ENCODE measurements at regions of chr9 and their contacts with region 1.

Region 1: GRCh38 chr9:86843206-86843605 is 104.1 kb downstream of the GAS1 start:
- DNase-seq: no peak
- H3K4me3 ChIP-seq: no peak overlapping the region
- H3K27ac ChIP-seq: no peak overlapping the region
- H3K4me1 ChIP-seq: no peaks in the 10 kb centered on the region
- H3K27me3 ChIP-seq: no peaks in the 10 kb centered on the region
- CTCF ChIP-seq: no peak

Region 2: GRCh38 chr9:86672301-86672700 is 170.9 kb before region 1 on chr9:
- intact Hi-C with region 1: loop called (anchors 10 kb)
- DNase-seq: no peak
- H3K4me3 ChIP-seq: no peak overlapping the region
- H3K27ac ChIP-seq: no peak overlapping the region
- H3K4me1 ChIP-seq: no peaks in the 10 kb centered on the region
- H3K27me3 ChIP-seq: no peaks in the 10 kb centered on the region
- CTCF ChIP-seq: no peak